ENCODE measurements at regions of chr3 and their contacts with region 1.

Region 1: GRCh38 chr3:71583566-71584449 is at the start of gene FOXP1:
- DNase-seq: peak; percentile 32 to 75 (median 43)
- ATAC-seq: peak; percentile 68
- H3K4me3 ChIP-seq: peak within 1 kb of the TSS; percentile 65
- H3K27ac ChIP-seq: peak within 1 kb of the TSS; percentile 90
- H3K4me1 ChIP-seq: peaks cover 8 to 27% of the 10 kb centered on the region in 2 experiments; a peak in 4 of 5 replicates
- H3K27me3 ChIP-seq: no peaks in the 10 kb centered on the region
- CTCF ChIP-seq: no peak
- EP300 ChIP-seq: no peak
- POLR2A ChIP-seq: no peak; the same call in 1 of the 2 replicates
- RAD21 ChIP-seq: no peak
- polyA plus RNA-seq, gene FOXP1: 7.7 to 13.8 TPM

Region 2: DNA sequence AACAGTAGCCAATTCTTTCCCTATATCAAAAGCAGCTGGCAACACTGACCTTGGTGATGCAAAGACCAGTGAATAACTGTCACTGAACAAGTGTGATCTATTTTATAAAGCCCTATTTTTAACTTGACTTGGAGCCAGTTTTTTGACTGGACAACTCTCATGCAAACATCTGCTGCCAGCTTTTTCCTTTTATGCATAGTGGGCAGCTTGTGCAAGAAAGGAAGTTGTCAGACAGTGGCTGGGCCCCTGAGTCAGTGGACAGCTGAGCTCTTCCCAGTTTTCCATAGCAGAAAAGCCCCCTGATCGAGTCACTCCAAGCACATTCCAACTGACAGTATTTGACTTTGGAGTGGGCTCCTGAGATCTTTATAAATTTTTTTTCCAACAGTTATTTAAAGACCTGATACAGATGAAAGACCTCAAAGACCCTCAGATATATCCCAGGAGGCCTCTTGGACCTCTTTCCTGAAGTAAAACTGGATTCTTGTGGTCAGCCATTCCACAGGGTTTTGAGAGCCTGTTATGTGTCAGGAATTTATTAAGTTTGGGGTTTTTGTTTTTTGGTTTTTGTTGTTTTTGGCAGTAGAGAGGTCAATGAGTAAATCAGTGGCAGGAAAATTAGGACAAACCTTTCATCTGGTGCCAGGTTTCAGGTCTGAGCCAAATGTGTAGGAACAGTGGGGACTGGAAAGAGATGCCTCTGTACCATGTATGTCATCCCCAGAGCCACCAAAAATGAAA is 751.2 kb before region 1 on chr3:
- CTCF ChIA-PET with region 1: no interaction called
- POLR2A ChIA-PET with region 1: no interaction called
- in situ Hi-C with region 1: no loop called
- intact Hi-C with region 1: no loop called
- DNase-seq: no peak
- ATAC-seq: no peak
- H3K4me3 ChIP-seq: no peak overlapping the region
- H3K27ac ChIP-seq: no peak overlapping the region
- H3K4me1 ChIP-seq: no peaks in the 10 kb centered on the region
- H3K27me3 ChIP-seq: no peaks in the 10 kb centered on the region; a peak in 1 of 5 replicates
- CTCF ChIP-seq: no peak
- EP300 ChIP-seq: no peak
- POLR2A ChIP-seq: no peak
- RAD21 ChIP-seq: no peak

Region 3: GRCh38 chr3:71006810-71007785 is 576.7 kb before region 1 on chr3:
- CTCF ChIA-PET with region 1: no interaction called
- POLR2A ChIA-PET with region 1: no interaction called
- in situ Hi-C with region 1: loop called (anchors 25 kb)
- intact Hi-C with region 1: loop called (anchors 10 kb)
- DNase-seq: peak; percentile 8 to 20 (median 13)
- ATAC-seq: peak; percentile 61; the same call in 2 of the 3 replicates
- H3K4me3 ChIP-seq: no peak overlapping the region
- H3K27ac ChIP-seq: no peak overlapping the region
- H3K4me1 ChIP-seq: no peaks in the 10 kb centered on the region
- H3K27me3 ChIP-seq: no peaks in the 10 kb centered on the region
- CTCF ChIP-seq: peak in 2 of 3 experiments; percentile 28 to 52; a peak in 3 of 6 replicates
- EP300 ChIP-seq: no peak
- POLR2A ChIP-seq: no peak
- RAD21 ChIP-seq: peak; percentile 70

Region 4: DNA sequence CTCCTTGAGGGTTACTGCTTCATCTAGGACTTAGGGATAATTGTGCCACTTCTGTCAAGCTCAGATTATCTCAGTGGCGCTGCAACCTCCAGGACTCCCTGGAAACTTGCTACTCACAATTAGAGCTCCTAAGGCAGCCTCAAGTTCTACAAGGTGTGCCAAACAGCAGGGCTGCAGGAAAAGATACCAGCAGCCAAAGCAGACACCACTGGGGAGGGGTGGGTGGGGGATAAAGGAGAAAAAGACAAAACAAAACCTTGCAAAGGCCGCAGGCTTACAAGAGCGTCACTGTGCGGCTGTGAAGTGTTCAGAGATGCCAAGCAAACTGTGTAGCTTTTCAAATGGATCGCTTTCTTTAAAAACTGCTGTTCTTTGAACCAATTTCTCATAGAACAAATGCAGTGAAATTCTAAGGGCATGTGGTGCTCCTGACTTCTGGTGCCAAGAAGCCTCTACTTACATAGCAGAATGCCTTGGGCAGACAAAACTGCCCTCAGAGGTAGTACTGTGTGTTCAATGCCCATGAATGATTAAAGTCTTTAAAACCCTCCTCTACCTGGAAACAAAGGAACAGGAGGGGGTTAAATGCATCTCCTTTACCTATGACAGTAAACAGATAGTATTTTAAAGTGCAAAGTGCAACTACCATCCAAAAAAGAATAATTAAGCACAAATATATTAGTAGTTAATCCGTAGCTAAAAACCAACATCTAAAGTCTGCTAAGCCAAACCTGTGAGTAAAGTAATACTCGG is 353.7 kb before region 1 on chr3:
- CTCF ChIA-PET with region 1: no interaction called
- POLR2A ChIA-PET with region 1: no interaction called
- in situ Hi-C with region 1: no loop called
- intact Hi-C with region 1: loop called (anchors 5 kb)
- DNase-seq: peak in 2 of 4 experiments; percentile 51 to 70
- ATAC-seq: peak; percentile 63
- H3K4me3 ChIP-seq: no peak overlapping the region
- H3K27ac ChIP-seq: peak overlapping the region; percentile 21; the same call in 1 of the 3 replicates
- H3K4me1 ChIP-seq: peaks cover 13 to 36% of the 10 kb centered on the region in 2 experiments
- H3K27me3 ChIP-seq: no peaks in the 10 kb centered on the region
- CTCF ChIP-seq: no peak
- EP300 ChIP-seq: no peak
- POLR2A ChIP-seq: no peak
- RAD21 ChIP-seq: no peak

Region 5: DNA sequence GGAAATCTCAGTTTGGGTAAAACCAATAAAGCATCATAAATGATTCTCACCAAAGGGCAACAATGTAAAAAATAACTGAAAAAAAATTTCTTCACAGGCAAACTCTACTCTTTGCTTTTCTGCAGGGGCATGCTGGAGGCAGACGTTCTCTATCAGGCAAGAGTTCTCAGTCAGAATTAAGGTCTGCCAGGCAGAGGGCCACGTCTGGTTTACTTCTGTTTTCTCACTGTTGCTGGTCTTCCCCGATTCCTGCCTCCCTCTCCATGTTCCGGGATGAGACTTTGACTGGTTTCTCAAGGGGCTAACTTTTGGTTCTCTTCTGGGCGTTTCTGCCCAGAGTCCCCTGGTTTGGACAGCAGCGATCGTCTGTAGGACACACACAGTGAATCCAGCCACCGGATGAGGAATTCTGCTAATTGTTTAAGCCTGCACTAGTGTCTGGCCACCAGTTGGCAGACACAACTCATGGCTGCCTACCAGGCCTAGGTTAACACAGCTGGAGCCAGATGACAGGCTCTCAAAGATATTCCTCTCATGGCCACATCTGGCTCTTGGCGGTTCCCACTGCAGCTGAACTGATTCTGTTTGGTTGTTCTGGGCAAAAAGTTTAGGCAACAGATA is 273.3 kb before region 1 on chr3:
- CTCF ChIA-PET with region 1: no interaction called
- POLR2A ChIA-PET with region 1: no interaction called
- in situ Hi-C with region 1: no loop called
- intact Hi-C with region 1: no loop called
- DNase-seq: no peak
- ATAC-seq: no peak
- H3K4me3 ChIP-seq: no peak overlapping the region
- H3K27ac ChIP-seq: no peak overlapping the region
- H3K4me1 ChIP-seq: no peaks in the 10 kb centered on the region
- H3K27me3 ChIP-seq: no peaks in the 10 kb centered on the region
- CTCF ChIP-seq: no peak
- EP300 ChIP-seq: no peak
- POLR2A ChIP-seq: no peak
- RAD21 ChIP-seq: no peak

Region 6: DNA sequence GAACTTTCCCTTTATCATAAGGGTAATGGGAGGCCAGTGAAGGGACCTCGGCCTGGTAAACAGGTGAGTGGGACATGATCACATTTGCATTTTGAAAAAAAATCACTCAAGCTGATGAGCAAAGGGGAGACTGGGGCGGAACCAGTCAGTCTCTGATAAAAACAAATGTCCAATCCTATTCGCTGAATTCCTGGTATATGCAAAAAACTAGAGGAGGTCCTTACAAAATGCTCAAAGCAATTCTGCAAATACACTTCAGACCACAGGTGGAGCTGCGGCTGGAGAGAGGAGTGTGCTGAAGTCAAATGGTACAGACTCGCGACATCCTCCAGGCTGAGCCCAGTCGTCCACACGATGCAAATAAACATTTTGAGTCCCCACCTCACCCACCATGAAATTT is 166.9 kb before region 1 on chr3:
- CTCF ChIA-PET with region 1: interaction called, 3 read pairs
- POLR2A ChIA-PET with region 1: no interaction called
- in situ Hi-C with region 1: no loop called
- intact Hi-C with region 1: loop called (anchors 5 kb)
- DNase-seq: peak; percentile 31 to 84 (median 56)
- ATAC-seq: peak; percentile 99
- H3K4me3 ChIP-seq: no peak overlapping the region
- H3K27ac ChIP-seq: no peak overlapping the region
- H3K4me1 ChIP-seq: no peaks in the 10 kb centered on the region; a peak in 2 of 5 replicates
- H3K27me3 ChIP-seq: no peaks in the 10 kb centered on the region
- CTCF ChIP-seq: peak; percentile 54 to 65 (median 58)
- EP300 ChIP-seq: no peak
- POLR2A ChIP-seq: no peak
- RAD21 ChIP-seq: peak; percentile 22 to 26; a peak in 1 of 4 replicates

Region 7: GRCh38 chr3:71542521-71543370 is 41.1 kb before region 1 on chr3:
- CTCF ChIA-PET with region 1: interaction called, 3 read pairs
- POLR2A ChIA-PET with region 1: interaction called, 3 read pairs
- in situ Hi-C with region 1: no loop called
- intact Hi-C with region 1: loop called (anchors 5 kb)
- DNase-seq: peak; percentile 21 to 87 (median 50)
- ATAC-seq: peak; percentile 97
- H3K4me3 ChIP-seq: no peak overlapping the region
- H3K27ac ChIP-seq: peak overlapping the region; percentile 57
- H3K4me1 ChIP-seq: peaks cover 12 to 31% of the 10 kb centered on the region in 2 experiments; a peak in 4 of 5 replicates
- H3K27me3 ChIP-seq: no peaks in the 10 kb centered on the region
- CTCF ChIP-seq: no peak
- EP300 ChIP-seq: peak; percentile 20; the same call in 1 of the 2 replicates
- POLR2A ChIP-seq: 0 out of 2 replicates have a peak, but pooled peaks have one; percentile 34
- RAD21 ChIP-seq: no peak